ENCODE measurements at regions of chr16 and their contacts with region 1.

Region 1: DNA sequence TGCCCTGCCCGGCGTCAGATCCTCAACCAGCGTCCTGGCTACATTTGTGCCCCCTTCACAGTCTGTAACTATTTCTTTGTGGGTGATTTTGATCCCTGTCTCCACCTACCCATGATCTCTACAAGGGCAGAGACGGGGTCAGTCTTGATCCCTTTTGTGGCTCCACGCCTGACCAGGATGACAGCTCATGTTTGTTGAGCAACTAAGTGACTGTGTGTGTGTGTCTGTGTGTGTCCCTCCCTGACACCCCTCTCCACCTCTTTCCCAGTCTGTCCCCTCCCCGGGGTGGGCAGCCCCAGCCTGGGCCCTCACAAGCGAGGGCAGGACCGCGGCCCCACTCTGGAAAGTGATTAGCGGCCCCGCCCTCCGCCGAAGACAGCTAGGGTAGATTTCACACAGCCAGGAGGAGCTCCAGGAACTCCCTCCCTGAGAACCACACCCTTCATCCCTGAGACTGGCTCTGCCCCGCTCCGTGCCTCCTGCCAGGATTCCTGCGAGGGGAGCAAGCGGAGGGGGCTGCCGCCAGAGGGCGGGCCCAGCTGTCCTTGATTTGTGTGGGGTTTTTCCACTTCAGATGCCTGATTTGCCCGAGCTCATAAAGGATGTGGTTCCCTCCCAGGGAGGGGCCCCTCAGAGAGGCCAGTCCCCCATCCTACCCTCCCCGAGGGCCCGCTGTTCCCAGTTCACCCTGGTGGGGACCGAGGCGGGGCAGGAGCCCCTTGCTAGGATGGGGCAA is 5.3 kb upstream of the HS3ST6 start:
- DNase-seq: peak in 1 of 6 donors; percentile 40
- ATAC-seq: peak; percentile 26 to 78 (median 35)
- H3K4me3 ChIP-seq: no peak overlapping the region
- H3K27ac ChIP-seq: no peak overlapping the region
- H3K4me1 ChIP-seq: no peaks in the 10 kb centered on the region
- H3K27me3 ChIP-seq: peaks cover 0 to 9% (median 0%) of the 10 kb centered on the region in 4 donors
- CTCF ChIP-seq: no peak

Region 2: DNA sequence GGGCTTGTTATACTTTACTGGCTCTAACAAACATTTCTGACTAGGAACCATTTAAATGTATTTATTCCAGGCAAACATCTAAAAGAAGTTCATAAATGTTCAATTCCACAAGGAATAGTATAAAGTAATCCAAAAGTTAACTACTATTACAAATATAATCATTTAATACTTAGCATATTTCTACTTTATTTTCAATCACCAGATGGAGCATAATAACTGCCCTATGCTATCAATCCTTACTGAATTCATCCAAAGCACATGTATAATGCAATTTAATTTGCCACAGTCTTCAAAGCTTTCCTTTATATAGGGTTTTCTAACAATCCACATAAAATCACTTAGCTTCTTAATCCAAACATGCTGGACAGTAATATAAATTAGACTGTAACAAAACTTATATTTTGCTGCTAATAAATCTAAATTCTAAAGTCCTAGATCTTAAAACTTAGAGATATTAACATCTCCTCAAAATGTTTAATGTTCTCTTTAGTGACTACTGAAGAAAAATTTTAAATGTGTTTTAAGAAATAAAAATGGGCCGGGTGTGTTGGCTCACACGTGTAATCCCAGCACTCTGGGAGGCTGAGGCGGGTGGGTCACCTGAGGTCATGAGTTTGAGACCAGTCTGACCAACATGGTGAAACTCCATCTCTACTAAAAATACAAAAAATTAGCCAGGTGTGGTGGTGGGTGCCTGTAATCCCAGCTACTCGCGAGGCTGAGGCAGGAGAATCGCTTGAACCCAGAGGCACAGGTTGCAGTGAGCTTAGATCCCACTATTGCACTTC is 57.4 kb before region 1 on chr16:
- intact Hi-C with region 1: loop called in 1 of 3 experiments (anchors 5 kb)
- DNase-seq: no peak
- ATAC-seq: no peak
- H3K4me3 ChIP-seq: no peak overlapping the region
- H3K27ac ChIP-seq: no peak overlapping the region
- H3K4me1 ChIP-seq: no peaks in the 10 kb centered on the region
- H3K27me3 ChIP-seq: peaks cover 0 to 7% (median 0%) of the 10 kb centered on the region in 4 donors
- CTCF ChIP-seq: no peak

Region 3: DNA sequence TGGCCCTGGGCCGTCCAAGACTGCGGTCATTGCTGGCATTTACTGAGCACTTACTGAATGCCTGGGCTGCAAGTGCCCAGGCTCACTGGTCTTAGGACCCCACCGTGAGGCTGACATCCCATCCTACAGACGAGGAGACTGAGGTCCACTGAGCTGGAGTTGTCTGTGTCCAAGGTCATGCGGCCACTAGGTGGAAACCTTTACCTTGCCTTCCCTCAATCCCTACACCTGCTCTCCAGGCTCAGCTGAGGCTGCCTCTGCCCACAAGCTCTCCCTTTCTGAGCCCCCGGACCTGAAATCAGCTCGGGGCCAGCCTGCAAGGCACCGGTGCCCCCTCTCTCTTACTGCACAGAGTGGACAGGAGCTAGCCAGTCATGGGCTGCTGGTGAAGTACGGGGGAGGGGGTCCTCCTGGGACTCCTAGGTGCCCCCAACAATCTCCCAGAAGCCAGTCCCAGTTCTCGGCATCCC is 271.4 kb after region 1 on chr16:
- intact Hi-C with region 1: no loop called
- DNase-seq: peak in 3 of 6 donors; percentile 53 to 68 (median 67)
- ATAC-seq: peak; percentile 79 to 94 (median 90)
- H3K4me3 ChIP-seq: no peak overlapping the region
- H3K27ac ChIP-seq: no peak overlapping the region
- H3K4me1 ChIP-seq: peaks cover 5 to 7% (median 7%) of the 10 kb centered on the region in 3 donors
- H3K27me3 ChIP-seq: no peaks in the 10 kb centered on the region
- CTCF ChIP-seq: peak; percentile 17 to 49 (median 35)

Measured in pancreas (tissue), 10 donors.